ENCODE measurements at regions of chr3 and their contacts with region 1.

Region 1: GRCh38 chr3:45730409-45731154 is 41.4 kb downstream of the SACM1L start:
- DNase-seq: no peak
- ATAC-seq: peak; percentile 96
- H3K4me3 Mint-ChIP-seq: peak overlapping the region; percentile 17
- H3K27ac Mint-ChIP-seq: peak overlapping the region; percentile 70
- H3K4me1 Mint-ChIP-seq: peaks cover 18% of the 10 kb centered on the region
- H3K27me3 Mint-ChIP-seq: no peaks in the 10 kb centered on the region
- CTCF ChIP-seq: no peak

Region 2: GRCh38 chr3:45688882-45689756 is 41.5 kb before region 1 on chr3 and contains the start of gene SACM1L:
- CTCF ChIA-PET with region 1: no interaction called
- POLR2A ChIA-PET with region 1: interaction called, 3 read pairs
- intact Hi-C with region 1: loop called (anchors 5 kb)
- DNase-seq: peak; percentile 90
- ATAC-seq: peak; percentile 88
- H3K4me3 Mint-ChIP-seq: peak within 1 kb of the TSS; percentile 88
- H3K27ac Mint-ChIP-seq: peak within 1 kb of the TSS; percentile 98
- H3K4me1 Mint-ChIP-seq: peaks cover 61% of the 10 kb centered on the region
- H3K27me3 Mint-ChIP-seq: peaks cover 3% of the 10 kb centered on the region
- CTCF ChIP-seq: no peak
- total RNA-seq, gene SACM1L: 43.1 and 55.5 TPM in 2 replicates

Region 3: DNA sequence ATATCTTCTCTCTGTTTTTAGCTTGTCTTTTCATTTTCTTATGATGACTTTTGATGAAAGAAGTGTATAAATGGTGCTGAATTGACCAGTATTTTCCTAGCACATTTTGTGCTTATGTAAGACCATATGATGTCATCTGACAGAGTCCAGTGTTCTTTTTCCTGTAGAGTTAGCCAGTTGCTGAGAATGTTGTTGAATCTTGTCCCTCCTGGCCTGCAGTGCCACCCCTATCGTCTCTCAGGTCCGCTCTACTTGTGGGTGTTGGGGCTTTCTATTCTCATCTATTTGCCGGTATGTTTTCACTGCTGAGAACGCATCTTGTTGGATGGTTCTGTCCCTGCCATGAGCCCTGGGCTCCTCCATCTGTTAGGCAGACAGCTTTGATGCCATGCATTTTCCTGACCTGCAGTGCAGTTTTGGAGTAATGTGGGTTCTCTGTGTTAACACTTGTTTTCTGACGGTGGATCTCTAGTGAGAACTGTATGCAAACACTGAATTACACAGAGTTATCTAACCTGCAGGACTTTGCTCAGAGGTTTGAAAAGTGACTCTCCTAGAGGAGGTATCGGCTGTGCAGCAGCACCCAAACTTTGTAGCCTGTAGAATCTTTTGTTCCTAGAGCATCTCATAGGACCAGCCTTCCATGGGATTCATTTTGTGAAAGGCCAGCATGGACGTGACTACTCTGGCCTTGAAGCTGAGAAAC is 21.1 kb after region 1 on chr3:
- CTCF ChIA-PET with region 1: no interaction called
- POLR2A ChIA-PET with region 1: no interaction called
- intact Hi-C with region 1: no loop called
- DNase-seq: no peak
- ATAC-seq: no peak
- H3K4me3 Mint-ChIP-seq: no peak overlapping the region
- H3K27ac Mint-ChIP-seq: no peak overlapping the region
- H3K4me1 Mint-ChIP-seq: no peaks in the 10 kb centered on the region
- H3K27me3 Mint-ChIP-seq: no peaks in the 10 kb centered on the region
- CTCF ChIP-seq: no peak

Measured in activated B cell treated with CpG ODN at 0.5 μM for 24 hours (primary cell).